ENCODE measurements at regions of chr7 and their contacts with region 1.

Region 1: DNA sequence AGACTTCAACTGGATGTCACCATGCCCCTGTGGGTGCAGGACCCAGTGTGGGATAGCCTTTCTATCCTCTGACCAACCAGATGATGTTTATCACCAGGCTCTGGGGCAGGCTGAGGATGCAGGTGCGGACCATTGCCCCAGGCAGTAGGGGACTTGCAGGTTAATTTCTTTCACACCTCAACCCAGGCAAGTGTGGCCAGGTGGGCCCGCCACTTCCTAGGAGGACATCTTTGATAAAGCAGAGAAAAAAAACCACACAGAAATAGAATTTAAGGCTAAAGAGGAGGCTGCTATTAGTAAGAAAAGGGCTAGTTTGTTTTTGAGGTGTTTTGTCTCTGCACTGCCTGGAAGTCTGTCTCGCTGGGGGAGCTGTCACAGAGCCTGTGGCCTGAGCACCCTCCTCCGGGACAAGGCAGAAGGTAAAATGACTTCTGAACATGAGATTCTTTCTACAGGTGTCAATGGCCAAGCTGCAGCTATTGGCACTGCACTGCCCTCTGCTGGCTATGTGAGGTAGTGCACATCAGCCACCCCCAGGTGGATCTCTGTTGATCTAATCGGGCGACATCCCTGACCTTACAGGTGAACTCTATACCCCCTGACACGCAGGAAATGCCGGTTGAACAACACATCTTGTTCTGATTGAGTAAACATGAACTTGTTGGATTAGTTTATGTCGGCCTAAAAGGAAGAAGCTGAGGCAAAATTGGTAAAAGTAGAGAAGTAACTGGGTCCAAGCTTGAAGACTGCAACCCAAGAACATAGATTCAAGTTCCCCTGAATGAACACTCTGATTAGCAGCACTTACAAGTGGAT is 21.0 kb downstream of the UPP1 start:
- DNase-seq: peak; percentile 91
- ATAC-seq: peak; percentile 95
- H3K4me3 Mint-ChIP-seq: no peak overlapping the region
- H3K27ac Mint-ChIP-seq: peak overlapping the region; percentile 67
- H3K4me1 Mint-ChIP-seq: peaks cover 21% of the 10 kb centered on the region
- H3K27me3 Mint-ChIP-seq: no peaks in the 10 kb centered on the region

Region 2: DNA sequence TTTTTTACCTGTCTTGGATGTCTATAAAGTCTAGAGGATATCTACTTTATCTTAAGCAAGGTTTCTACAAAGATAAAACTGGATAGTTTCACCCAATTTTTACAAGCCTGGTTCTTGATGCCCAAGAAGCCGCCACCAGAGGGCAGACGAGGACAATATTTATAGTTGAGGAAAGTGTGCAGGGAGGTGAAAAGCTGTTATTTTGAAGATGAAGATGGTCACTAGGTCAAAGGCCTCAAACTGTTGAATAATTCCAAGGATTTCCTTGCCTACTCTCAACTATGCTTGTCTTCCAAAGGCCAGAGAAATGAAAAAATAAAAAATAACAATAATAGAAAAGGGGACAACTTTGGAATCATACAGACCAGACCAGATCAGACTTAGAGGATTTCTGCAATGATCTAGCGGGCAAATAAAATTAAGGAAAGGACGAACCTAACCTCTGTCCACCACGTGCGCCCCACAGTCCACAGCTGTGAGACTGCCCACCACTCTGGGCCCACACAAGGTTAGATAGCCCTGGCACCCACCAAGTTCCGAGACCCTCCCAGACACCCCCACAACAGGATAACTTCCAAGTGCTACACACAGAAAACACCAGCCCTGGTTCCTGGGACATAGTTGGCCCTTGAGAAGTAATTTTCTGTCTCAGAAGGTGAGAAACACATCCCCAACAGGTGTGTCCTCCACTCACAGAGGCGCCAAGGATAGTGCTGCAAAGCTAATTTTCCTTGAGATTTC is 164.6 kb before region 1 on chr7:
- CTCF ChIA-PET with region 1: interaction called, 88 read pairs
- POLR2A ChIA-PET with region 1: no interaction called
- DNase-seq: peak; percentile 84
- ATAC-seq: peak; percentile 65
- H3K4me3 Mint-ChIP-seq: no peak overlapping the region
- H3K27ac Mint-ChIP-seq: no peak overlapping the region
- H3K4me1 Mint-ChIP-seq: no peaks in the 10 kb centered on the region
- H3K27me3 Mint-ChIP-seq: no peaks in the 10 kb centered on the region

Region 3: GRCh38 chr7:47968847-47969774 is 140.9 kb before region 1 on chr7:
- CTCF ChIA-PET with region 1: interaction called, 14 read pairs
- POLR2A ChIA-PET with region 1: no interaction called
- DNase-seq: peak; percentile 67
- ATAC-seq: peak; percentile 75
- H3K4me3 Mint-ChIP-seq: no peak overlapping the region
- H3K27ac Mint-ChIP-seq: no peak overlapping the region
- H3K4me1 Mint-ChIP-seq: peaks cover 24% of the 10 kb centered on the region
- H3K27me3 Mint-ChIP-seq: no peaks in the 10 kb centered on the region

Region 4: GRCh38 chr7:47991741-47992311 is 118.2 kb before region 1 on chr7:
- CTCF ChIA-PET with region 1: interaction called, 68 read pairs
- POLR2A ChIA-PET with region 1: interaction called, 4 read pairs
- DNase-seq: peak; percentile 95
- ATAC-seq: peak; percentile 99
- H3K4me3 Mint-ChIP-seq: peak overlapping the region; percentile 79
- H3K27ac Mint-ChIP-seq: peak overlapping the region; percentile 89
- H3K4me1 Mint-ChIP-seq: peaks cover 21% of the 10 kb centered on the region
- H3K27me3 Mint-ChIP-seq: no peaks in the 10 kb centered on the region

Region 5: DNA sequence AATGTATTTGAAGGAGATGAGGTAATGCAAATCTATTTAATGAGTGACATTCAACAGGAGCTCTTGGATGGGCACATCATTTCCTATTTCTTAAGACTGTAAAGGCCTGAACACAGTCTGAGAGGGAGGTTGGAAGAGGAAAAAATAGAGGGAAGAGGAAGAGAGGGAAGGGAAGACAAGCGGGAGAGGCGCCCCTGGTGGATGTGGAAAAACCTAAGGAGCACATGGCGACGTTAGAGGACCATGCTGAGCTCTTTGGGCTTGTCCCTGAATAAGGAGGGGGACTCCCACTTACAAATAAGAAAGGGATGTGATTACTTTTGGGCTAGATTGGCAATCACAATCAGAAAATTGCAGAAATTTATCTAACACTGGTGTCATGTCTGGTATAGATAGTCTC is 100.8 kb before region 1 on chr7:
- CTCF ChIA-PET with region 1: no interaction called
- POLR2A ChIA-PET with region 1: no interaction called
- DNase-seq: no peak
- ATAC-seq: no peak
- H3K4me3 Mint-ChIP-seq: no peak overlapping the region
- H3K27ac Mint-ChIP-seq: no peak overlapping the region
- H3K4me1 Mint-ChIP-seq: no peaks in the 10 kb centered on the region
- H3K27me3 Mint-ChIP-seq: no peaks in the 10 kb centered on the region

Region 6: DNA sequence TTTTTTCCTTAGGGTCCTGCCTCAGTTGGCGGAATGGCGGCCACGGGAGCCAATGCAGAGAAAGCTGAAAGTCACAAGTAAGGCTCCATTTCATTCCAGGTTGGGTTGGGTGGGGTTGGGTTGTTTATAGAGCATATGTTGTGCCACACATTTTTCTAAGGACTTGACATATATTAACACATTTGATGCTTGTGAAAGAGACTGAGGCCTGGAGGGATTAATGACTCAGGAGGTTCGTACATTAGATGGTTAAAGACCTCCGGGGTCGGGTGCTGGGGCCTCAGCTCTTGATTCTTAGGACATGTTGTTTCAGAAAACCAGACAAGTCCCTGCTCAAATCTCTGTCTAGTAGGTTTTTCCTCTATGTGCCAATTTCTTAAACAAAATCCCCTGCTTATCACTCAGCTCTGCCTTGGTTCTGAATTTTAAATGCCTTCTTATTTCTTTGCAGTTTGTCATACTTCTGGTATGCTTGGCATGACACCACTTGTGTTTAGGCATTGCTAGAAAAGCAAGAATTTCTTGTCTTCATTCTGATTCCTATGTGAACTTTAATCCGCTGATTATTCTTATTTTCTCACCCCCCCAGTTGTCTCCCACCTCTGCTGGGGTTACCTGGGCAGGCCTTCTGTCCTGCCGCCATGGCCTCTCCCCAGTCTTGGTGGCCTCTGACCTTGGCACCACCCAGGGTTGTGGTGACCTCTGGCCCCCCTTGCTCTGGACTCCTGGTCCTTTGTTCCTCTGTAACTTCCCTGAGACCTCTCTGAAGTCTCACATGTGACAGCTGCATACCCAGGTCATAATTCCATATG is 15.1 kb before region 1 on chr7:
- CTCF ChIA-PET with region 1: interaction called, 17 read pairs
- POLR2A ChIA-PET with region 1: interaction called, 5 read pairs
- DNase-seq: no peak
- ATAC-seq: no peak
- H3K4me3 Mint-ChIP-seq: no peak overlapping the region
- H3K27ac Mint-ChIP-seq: peak overlapping the region; percentile 70
- H3K4me1 Mint-ChIP-seq: peaks cover 89% of the 10 kb centered on the region
- H3K27me3 Mint-ChIP-seq: no peaks in the 10 kb centered on the region

Region 7: DNA sequence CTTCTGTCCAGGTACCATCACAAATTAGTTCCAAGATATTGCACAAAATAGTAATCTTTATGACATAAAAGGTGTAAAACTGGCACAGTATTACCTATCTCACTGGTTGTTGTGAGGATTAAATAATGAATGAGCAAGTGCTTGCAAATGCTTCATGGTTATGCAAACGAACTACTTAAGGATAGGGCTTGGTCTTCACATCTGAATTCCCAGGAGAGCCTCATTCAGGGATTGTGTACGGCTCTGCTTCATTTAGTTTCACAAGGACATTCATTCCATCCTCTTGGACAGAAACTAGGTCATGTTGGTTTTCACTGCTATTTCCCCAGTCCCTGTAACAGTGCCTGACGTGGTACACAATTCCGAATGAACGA is 73.3 kb after region 1 on chr7:
- CTCF ChIA-PET with region 1: no interaction called
- POLR2A ChIA-PET with region 1: no interaction called
- DNase-seq: no peak
- ATAC-seq: no peak
- H3K4me3 Mint-ChIP-seq: no peak overlapping the region
- H3K27ac Mint-ChIP-seq: no peak overlapping the region
- H3K4me1 Mint-ChIP-seq: no peaks in the 10 kb centered on the region
- H3K27me3 Mint-ChIP-seq: peaks cover 2% of the 10 kb centered on the region

Region 8: DNA sequence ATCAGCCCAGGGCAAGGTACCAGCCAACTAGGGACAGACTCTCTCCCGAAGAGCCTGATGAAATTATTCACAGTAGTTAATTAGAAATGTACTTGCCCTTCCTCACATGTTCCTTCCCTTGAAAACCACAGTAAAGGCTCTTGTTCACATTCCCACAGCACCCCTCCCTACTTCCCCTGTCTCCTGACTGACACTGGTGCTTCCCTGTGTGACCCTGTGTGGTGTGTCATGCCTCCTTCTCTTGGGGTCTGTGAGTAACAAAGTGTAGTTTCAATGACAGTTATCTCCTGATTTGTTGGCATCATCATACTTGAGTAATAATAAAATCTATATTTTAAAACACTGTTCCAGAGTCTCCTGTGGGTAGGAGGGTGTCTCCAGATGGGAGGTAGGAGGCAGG is 270.9 kb after region 1 on chr7:
- CTCF ChIA-PET with region 1: no interaction called
- POLR2A ChIA-PET with region 1: no interaction called
- DNase-seq: no peak
- ATAC-seq: no peak
- H3K4me3 Mint-ChIP-seq: no peak overlapping the region
- H3K27ac Mint-ChIP-seq: no peak overlapping the region
- H3K4me1 Mint-ChIP-seq: no peaks in the 10 kb centered on the region
- H3K27me3 Mint-ChIP-seq: no peaks in the 10 kb centered on the region

Measured in activated CD8-positive, alpha-beta T cell treated with anti-CD3 and anti-CD28 coated beads, Interleukin-2, amount 10 ng/mL, durations not matched to agents 7 days and 5 days (primary cell).